Activated CD4-positive, alpha-beta memory T cell treated with anti-CD3 and anti-CD28 coated beads, Interleukin-2, amount 10 ng/mL, durations not matched to agents 7 days and 5 days (primary cell): ENCODE measurements at regions of chr9 and their contacts with region 1.

Region 1: GRCh38 chr9:78296893-78297671 is at the start of gene PSAT1:
- DNase-seq: peak; percentile 95
- H3K4me3 Mint-ChIP-seq: peak within 1 kb of the TSS; percentile 93
- H3K27ac Mint-ChIP-seq: peak within 1 kb of the TSS; percentile 87
- H3K4me1 Mint-ChIP-seq: peaks cover 53% of the 10 kb centered on the region
- H3K27me3 Mint-ChIP-seq: no peaks in the 10 kb centered on the region
- total RNA-seq, gene PSAT1: 125 to 130 TPM

Region 2: DNA sequence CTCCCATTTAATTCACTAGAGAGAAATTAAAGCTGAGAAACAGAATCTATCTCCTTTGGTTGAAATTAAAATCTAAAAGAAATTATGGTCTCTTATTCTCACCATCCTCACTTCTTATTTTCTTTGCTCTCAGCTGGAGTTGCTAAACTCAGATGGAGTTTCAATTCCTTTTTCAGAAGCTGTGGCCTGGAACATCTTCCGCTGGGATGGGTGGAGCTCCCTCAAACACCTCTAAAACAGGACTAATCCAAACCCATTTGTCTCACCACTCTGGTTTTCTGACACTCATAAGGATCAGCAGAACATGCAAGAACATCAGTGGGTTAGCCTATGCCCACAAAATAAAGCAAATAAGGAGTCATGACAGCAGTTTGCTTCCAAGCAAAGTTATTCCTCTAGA is 100.8 kb before region 1 on chr9:
- CTCF ChIA-PET with region 1: no interaction called
- POLR2A ChIA-PET with region 1: interaction called, 15 read pairs
- DNase-seq: no peak
- H3K4me3 Mint-ChIP-seq: no peak overlapping the region
- H3K27ac Mint-ChIP-seq: no peak overlapping the region
- H3K4me1 Mint-ChIP-seq: peaks cover 12% of the 10 kb centered on the region
- H3K27me3 Mint-ChIP-seq: no peaks in the 10 kb centered on the region

Region 3: DNA sequence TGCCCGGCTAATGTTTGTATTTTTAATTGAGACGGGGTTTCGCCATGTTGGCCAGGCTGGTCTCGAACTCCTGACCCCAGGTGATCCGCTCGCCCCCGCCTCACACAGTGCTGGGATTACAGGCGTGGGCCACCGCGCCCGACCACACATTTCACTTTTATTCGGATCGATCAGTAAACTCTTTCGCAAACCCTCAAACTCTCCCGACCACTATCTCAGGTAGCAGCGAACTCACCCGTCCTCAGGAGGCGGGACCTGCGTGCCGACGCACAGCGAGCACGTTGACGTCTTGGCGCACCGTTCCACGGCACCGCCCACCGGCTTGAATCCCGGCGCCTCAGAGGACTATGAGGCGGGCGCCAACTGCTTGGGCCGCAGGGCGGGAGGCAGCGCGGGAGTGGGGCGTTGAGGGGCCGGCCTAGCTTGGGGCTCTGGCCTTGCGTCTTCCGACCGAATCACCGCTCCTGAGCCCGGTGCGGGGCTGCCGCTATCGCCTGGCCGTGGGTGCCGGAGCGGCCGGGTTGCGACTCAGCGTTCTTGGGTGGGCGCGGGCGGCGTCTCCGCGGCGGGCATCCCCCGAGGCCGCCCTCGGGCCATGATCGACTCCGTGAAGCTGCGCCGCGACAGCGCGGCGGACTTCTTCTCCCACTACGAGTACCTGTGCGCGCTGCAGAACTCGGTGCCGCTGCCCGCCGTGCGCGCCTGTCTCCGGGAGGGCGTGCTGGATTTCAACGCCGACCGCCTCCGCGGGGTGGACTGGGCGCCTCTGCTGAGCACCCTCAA is 61.1 kb before region 1 on chr9 and contains the start of gene CEP78:
- CTCF ChIA-PET with region 1: interaction called, 5 read pairs
- POLR2A ChIA-PET with region 1: interaction called, 51 read pairs
- DNase-seq: peak; percentile 91
- H3K4me3 Mint-ChIP-seq: peak within 1 kb of the TSS; percentile 62
- H3K27ac Mint-ChIP-seq: peak within 1 kb of the TSS; percentile 72
- H3K4me1 Mint-ChIP-seq: peaks cover 47% of the 10 kb centered on the region
- H3K27me3 Mint-ChIP-seq: no peaks in the 10 kb centered on the region
- total RNA-seq, gene CEP78: 41.8 to 44.3 TPM

Region 4: DNA sequence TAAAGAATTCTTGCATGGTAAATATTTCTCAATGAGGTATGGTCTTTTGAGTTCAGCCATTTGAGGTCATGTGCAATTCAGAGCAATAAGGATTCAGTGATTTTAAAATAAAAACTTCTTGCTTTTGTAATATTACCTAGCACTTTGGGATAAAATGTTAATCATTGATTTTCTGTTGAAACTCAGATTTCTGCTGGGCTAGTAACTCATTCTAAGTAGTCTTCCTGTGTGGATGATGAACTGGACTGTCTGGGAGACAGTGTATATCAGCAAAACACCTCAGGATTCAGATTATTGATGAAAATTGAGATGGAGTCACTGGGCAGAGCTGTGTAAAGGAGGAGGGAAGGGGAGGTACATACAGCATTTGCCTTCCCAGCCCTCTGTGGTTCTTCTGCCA is 11.0 kb before region 1 on chr9:
- CTCF ChIA-PET with region 1: interaction called, 5 read pairs
- POLR2A ChIA-PET with region 1: interaction called, 11 read pairs
- DNase-seq: no peak
- H3K4me3 Mint-ChIP-seq: no peak overlapping the region
- H3K27ac Mint-ChIP-seq: no peak overlapping the region
- H3K4me1 Mint-ChIP-seq: no peaks in the 10 kb centered on the region
- H3K27me3 Mint-ChIP-seq: peaks cover 3% of the 10 kb centered on the region

Region 5: GRCh38 chr9:78314953-78315870 is 18.1 kb after region 1 on chr9:
- CTCF ChIA-PET with region 1: no interaction called
- POLR2A ChIA-PET with region 1: interaction called, 18 read pairs
- DNase-seq: peak; percentile 0
- H3K4me3 Mint-ChIP-seq: no peak overlapping the region
- H3K27ac Mint-ChIP-seq: no peak overlapping the region
- H3K4me1 Mint-ChIP-seq: no peaks in the 10 kb centered on the region
- H3K27me3 Mint-ChIP-seq: no peaks in the 10 kb centered on the region

Region 6: DNA sequence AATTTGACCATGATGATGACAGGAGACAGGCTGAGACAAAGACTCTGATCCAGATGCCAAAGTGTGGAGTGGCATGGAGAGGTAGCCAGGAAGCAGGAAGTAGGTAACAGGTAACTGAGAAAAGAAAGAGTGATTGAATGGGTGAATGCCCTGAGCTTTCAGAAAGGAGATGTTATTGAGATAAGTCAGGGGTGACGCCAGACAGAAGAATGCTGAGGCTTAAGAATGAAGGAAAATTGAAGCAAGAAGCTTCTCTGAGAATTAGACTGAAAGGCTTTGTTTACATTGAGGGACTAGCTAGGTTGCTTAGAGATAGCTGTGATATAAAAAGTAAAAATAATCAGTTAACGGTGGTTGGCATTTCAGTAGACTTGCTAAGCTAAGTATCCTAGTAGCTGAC is 165.5 kb after region 1 on chr9:
- CTCF ChIA-PET with region 1: no interaction called
- POLR2A ChIA-PET with region 1: no interaction called
- DNase-seq: no peak
- H3K4me3 Mint-ChIP-seq: no peak overlapping the region
- H3K27ac Mint-ChIP-seq: no peak overlapping the region
- H3K4me1 Mint-ChIP-seq: no peaks in the 10 kb centered on the region
- H3K27me3 Mint-ChIP-seq: peaks cover 4% of the 10 kb centered on the region

Region 7: GRCh38 chr9:79571309-79572031 is 1274.4 kb after region 1 on chr9 and contains the start of gene TLE4:
- CTCF ChIA-PET with region 1: no interaction called
- POLR2A ChIA-PET with region 1: interaction called, 10 read pairs
- DNase-seq: peak; percentile 99
- H3K4me3 Mint-ChIP-seq: peak within 1 kb of the TSS; percentile 82
- H3K27ac Mint-ChIP-seq: peak within 1 kb of the TSS; percentile 72
- H3K4me1 Mint-ChIP-seq: peaks cover 31% of the 10 kb centered on the region
- H3K27me3 Mint-ChIP-seq: no peaks in the 10 kb centered on the region
- total RNA-seq, gene TLE4: 33.3 to 38.3 TPM